ENCODE measurements at regions of chr6 and their contacts with region 1.

Region 1: DNA sequence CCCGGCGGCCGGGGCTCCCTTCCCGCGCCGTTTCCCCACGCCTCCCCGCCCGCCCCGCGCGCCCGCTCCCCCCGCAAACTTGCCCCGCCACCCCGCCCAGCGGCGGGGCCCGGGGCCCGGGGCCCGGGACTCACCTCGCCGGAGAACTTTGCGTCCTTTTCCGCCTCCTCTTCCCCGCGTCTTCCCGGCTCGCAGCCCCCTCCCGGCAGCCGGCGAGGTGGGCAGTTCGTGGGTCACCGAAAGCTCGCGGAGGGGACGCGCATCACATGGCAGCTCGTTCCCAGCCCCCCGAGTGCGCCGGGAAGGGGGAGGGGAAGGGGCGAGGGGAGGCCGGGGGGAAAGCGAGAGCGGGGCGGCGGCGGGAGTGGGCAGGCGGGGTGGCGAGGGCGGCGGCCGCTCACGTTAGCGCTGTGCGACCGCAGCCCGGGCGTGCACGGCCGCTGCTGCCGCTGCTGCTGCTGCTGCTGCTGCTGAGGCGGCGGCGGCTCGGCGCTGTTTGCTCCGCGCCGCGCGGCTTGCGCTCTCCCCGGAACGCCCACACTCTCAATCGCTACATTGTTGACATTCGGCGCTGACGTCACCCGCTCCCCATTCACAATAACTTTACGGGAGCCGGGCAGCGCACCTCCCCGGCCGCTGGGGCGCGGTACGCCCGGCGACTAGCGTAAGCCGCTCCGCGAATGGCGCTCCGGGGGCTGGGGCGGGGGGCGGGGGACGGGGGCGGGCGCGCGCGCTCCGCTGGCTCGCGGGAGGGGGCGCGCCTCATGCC is at the start of gene BACH2:
- DNase-seq: peak; percentile 99
- ATAC-seq: peak; percentile 69
- H3K4me3 Mint-ChIP-seq: peak within 1 kb of the TSS; percentile 83
- H3K27ac Mint-ChIP-seq: peak within 1 kb of the TSS; percentile 94
- H3K4me1 Mint-ChIP-seq: peaks cover 38% of the 10 kb centered on the region
- H3K27me3 Mint-ChIP-seq: peaks cover 3% of the 10 kb centered on the region
- CTCF ChIP-seq: no peak
- total RNA-seq, gene BACH2: 60.7 to 66.9 TPM

Region 2: GRCh38 chr6:90162648-90163387 is 133.7 kb before region 1 on chr6:
- CTCF ChIA-PET with region 1: no interaction called
- POLR2A ChIA-PET with region 1: no interaction called
- intact Hi-C with region 1: no loop called
- DNase-seq: no peak
- ATAC-seq: peak; percentile 48
- H3K4me3 Mint-ChIP-seq: peak overlapping the region; percentile 3
- H3K27ac Mint-ChIP-seq: peak overlapping the region; percentile 75
- H3K4me1 Mint-ChIP-seq: peaks cover 56% of the 10 kb centered on the region
- H3K27me3 Mint-ChIP-seq: no peaks in the 10 kb centered on the region
- CTCF ChIP-seq: no peak

Region 3: GRCh38 chr6:90319044-90319443 is 22.5 kb after region 1 on chr6:
- CTCF ChIA-PET with region 1: no interaction called
- POLR2A ChIA-PET with region 1: interaction called, 10 read pairs
- intact Hi-C with region 1: no loop called
- DNase-seq: peak; percentile 23
- ATAC-seq: peak; percentile 82
- H3K4me3 Mint-ChIP-seq: no peak overlapping the region
- H3K27ac Mint-ChIP-seq: peak overlapping the region; percentile 37
- H3K4me1 Mint-ChIP-seq: peaks cover 32% of the 10 kb centered on the region
- H3K27me3 Mint-ChIP-seq: no peaks in the 10 kb centered on the region
- CTCF ChIP-seq: no peak

Measured in activated CD8-positive, alpha-beta T cell treated with anti-CD3 and anti-CD28 coated beads for 36 hours (primary cell).